ENCODE measurements at regions of chr16 and their contacts with region 1.

Region 1: GRCh38 chr16:23556881-23557778 is at the starts of genes EARS2 and UBFD1:
- DNase-seq: peak; percentile 96
- H3K4me3 Mint-ChIP-seq: peak within 1 kb of the TSS; percentile 95
- H3K27ac Mint-ChIP-seq: peak within 1 kb of the TSS; percentile 92
- H3K4me1 Mint-ChIP-seq: peaks cover 44% of the 10 kb centered on the region
- H3K27me3 Mint-ChIP-seq: peaks cover 4% of the 10 kb centered on the region
- total RNA-seq, gene EARS2: 27.8 and 29.9 TPM in 2 replicates
- total RNA-seq, gene UBFD1: 54.9 and 55.0 TPM in 2 replicates

Region 2: GRCh38 chr16:21952793-21953540 is 1604.2 kb before region 1 on chr16 and contains the start of gene UQCRC2:
- intact Hi-C with region 1: loop called (anchors 2 kb)
- DNase-seq: peak; percentile 85
- H3K4me3 Mint-ChIP-seq: peak within 1 kb of the TSS; percentile 99
- H3K27ac Mint-ChIP-seq: peak within 1 kb of the TSS; percentile 95
- H3K4me1 Mint-ChIP-seq: peaks cover 50% of the 10 kb centered on the region
- H3K27me3 Mint-ChIP-seq: no peaks in the 10 kb centered on the region
- total RNA-seq, gene UQCRC2: 235 and 260 TPM in 2 replicates

Region 3: GRCh38 chr16:23452572-23453337 is 104.4 kb before region 1 on chr16 and contains the start of gene COG7:
- intact Hi-C with region 1: loop called (anchors 1 kb)
- DNase-seq: peak; percentile 83
- H3K4me3 Mint-ChIP-seq: peak within 1 kb of the TSS; percentile 98
- H3K27ac Mint-ChIP-seq: peak within 1 kb of the TSS; percentile 95
- H3K4me1 Mint-ChIP-seq: peaks cover 30% of the 10 kb centered on the region
- H3K27me3 Mint-ChIP-seq: peaks cover 1% of the 10 kb centered on the region
- total RNA-seq, gene COG7: 23.5 and 24.1 TPM in 2 replicates

Region 4: DNA sequence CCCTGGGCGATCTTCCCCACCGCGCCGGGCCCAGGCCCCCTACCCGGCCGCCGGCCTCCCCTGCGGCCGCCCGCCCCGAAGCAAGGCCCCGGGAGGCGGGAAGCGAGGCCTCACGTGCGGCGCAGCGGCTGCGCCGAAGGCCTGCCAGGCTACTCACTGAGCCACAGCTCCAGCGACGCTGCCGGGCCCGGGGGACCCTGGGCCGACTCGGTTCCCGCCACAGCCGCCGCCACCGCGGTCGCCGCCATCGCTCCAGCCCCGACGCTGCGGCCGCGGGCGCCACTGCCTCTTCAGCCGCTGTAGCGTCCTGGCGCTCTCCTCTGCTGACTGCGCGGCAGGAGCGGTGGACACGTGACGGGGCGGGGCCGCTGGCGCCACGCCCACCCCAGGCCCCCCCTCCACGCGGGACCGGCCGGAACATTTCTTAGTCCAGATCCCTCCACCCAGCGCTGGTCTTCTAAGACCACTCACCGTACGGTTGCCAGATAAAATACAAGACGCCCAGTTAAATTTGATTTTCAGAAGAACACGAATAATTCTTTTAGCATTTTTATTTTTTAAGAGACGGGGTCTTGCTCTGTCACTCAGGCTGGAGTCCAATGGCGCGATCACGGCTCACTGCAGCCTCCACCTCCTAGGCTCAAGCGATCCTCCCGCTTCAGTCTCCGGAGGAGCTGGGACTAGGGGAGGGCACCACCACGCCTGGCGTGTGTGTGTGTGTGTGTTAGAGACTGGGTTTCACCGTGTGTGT is 46.8 kb before region 1 on chr16 and contains the start of gene GGA2:
- intact Hi-C with region 1: loop called (anchors 1 kb)
- DNase-seq: peak; percentile 74
- H3K4me3 Mint-ChIP-seq: peak within 1 kb of the TSS; percentile 89
- H3K27ac Mint-ChIP-seq: peak within 1 kb of the TSS; percentile 87
- H3K4me1 Mint-ChIP-seq: peaks cover 50% of the 10 kb centered on the region
- H3K27me3 Mint-ChIP-seq: no peaks in the 10 kb centered on the region
- total RNA-seq, gene GGA2: 106 and 112 TPM in 2 replicates

Region 5: DNA sequence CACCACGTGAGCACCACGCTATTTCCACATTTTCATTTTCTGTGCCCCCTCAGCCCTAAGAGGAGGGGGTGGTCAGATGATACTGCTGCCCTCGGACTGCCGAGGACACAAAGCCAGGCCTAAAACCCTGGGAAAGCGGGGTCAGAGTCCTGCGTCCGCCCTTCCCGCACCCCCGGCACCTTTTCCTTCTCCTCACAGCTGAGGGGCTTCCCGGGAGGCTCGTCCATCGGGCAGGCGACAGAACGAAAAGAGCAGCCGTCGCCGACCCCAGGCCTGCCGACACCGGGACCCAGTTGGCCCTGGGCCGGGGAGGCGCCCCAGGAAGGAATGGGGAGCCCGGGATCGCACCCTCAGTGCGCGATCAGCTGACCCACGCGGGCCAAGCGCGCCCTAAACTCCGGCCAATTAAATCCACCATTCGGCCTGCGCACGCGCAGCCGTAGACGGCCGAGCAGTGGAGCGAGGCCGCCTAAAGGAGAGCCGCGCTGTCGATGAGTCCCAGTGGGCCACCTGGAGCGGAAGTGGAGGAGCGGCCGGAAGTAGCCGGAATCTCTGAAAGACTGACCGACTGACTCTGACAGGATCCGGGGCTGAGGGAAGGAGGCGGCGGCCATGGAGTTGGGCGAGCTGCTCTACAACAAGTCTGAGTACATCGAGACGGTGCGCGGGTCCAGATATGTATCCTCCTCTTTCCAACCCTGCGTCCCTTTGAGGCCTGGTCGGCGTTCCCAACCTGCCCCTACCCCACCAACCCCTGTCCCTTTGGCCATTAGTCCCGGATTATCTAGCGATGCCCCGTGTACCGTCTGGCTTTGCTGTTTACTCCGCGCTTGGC is 84.0 kb after region 1 on chr16 and contains the starts of genes DCTN5 and PALB2:
- intact Hi-C with region 1: loop called (anchors 1 kb)
- DNase-seq: peak; percentile 90
- H3K4me3 Mint-ChIP-seq: peak within 1 kb of the TSS; percentile 98
- H3K27ac Mint-ChIP-seq: peak within 1 kb of the TSS; percentile 97
- H3K4me1 Mint-ChIP-seq: peaks cover 31% of the 10 kb centered on the region
- H3K27me3 Mint-ChIP-seq: no peaks in the 10 kb centered on the region
- total RNA-seq, gene DCTN5: 102 and 105 TPM in 2 replicates
- total RNA-seq, gene PALB2: 34.4 and 36.2 TPM in 2 replicates

Region 6: GRCh38 chr16:24539291-24539849 is 982.2 kb after region 1 on chr16 and contains the start of gene RBBP6:
- intact Hi-C with region 1: loop called (anchors 1 kb)
- DNase-seq: peak; percentile 92
- H3K4me3 Mint-ChIP-seq: peak within 1 kb of the TSS; percentile 100
- H3K27ac Mint-ChIP-seq: peak within 1 kb of the TSS; percentile 100
- H3K4me1 Mint-ChIP-seq: peaks cover 30% of the 10 kb centered on the region
- H3K27me3 Mint-ChIP-seq: no peaks in the 10 kb centered on the region
- total RNA-seq, gene RBBP6: 67.0 and 68.4 TPM in 2 replicates

Measured in activated T-helper 1 cell treated with anti-CD3 and anti-CD28 coated beads, Interleukin-12 subunit alpha, Interleukin-12 subunit beta, Interleukin-2, Interleukin-4 antibody, amounts not matched to agents 30 ng/mL and 10 ng/mL and 1 ng/mL, durations not matched to agents 14 hours and 24 hours and 36 hours (primary cell).